ENCODE measurements at regions of chr19 and their contacts with region 1.

Region 1: GRCh38 chr19:52139252-52140031 is at the start of gene ZNF616:
- DNase-seq: peak; percentile 96
- H3K4me3 Mint-ChIP-seq: peak within 1 kb of the TSS; percentile 95
- H3K27ac Mint-ChIP-seq: peak within 1 kb of the TSS; percentile 82
- H3K4me1 Mint-ChIP-seq: peaks cover 11% of the 10 kb centered on the region
- H3K27me3 Mint-ChIP-seq: no peaks in the 10 kb centered on the region
- CTCF ChIP-seq: peak; percentile 60
- total RNA-seq, gene ZNF616: 9.5 and 13.5 TPM in 2 replicates

Region 2: GRCh38 chr19:52048555-52049501 is 90.6 kb before region 1 on chr19 and contains the start of gene ZNF432:
- CTCF ChIA-PET with region 1: interaction called, 3 read pairs
- POLR2A ChIA-PET with region 1: interaction called, 12 read pairs
- intact Hi-C with region 1: no loop called
- DNase-seq: peak; percentile 92
- H3K4me3 Mint-ChIP-seq: peak within 1 kb of the TSS; percentile 99
- H3K27ac Mint-ChIP-seq: peak within 1 kb of the TSS; percentile 100
- H3K4me1 Mint-ChIP-seq: peaks cover 11% of the 10 kb centered on the region
- H3K27me3 Mint-ChIP-seq: no peaks in the 10 kb centered on the region
- CTCF ChIP-seq: no peak
- total RNA-seq, gene ZNF432: 17.2 and 25.4 TPM in 2 replicates

Region 3: DNA sequence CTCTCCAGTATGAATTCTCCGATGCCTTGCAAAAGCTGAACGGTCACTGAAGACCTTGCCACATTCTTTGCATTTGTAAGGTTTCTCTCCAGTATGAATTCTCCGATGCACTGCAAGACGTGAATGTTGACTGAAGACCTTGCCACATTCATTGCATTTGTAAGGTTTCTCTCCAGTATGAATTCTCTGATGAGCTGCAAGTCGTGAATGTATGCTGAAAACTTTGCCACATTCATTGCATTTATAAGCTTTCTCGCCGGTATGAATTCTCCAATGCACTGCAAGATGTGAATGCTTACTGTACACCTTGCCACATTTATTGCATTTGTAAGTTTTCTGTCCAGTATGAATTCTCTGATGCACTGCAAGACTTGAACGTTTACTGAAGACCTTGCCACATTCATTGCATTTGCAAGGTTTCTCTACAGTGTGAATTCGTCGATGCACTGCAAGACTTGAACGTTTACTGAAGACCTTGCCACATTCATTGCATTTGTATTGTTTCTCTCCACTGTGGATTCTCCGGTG is 23.9 kb before region 1 on chr19:
- CTCF ChIA-PET with region 1: no interaction called
- POLR2A ChIA-PET with region 1: no interaction called
- intact Hi-C with region 1: no loop called
- DNase-seq: no peak
- H3K4me3 Mint-ChIP-seq: no peak overlapping the region
- H3K27ac Mint-ChIP-seq: no peak overlapping the region
- H3K4me1 Mint-ChIP-seq: no peaks in the 10 kb centered on the region
- H3K27me3 Mint-ChIP-seq: no peaks in the 10 kb centered on the region
- CTCF ChIP-seq: no peak

Region 4: DNA sequence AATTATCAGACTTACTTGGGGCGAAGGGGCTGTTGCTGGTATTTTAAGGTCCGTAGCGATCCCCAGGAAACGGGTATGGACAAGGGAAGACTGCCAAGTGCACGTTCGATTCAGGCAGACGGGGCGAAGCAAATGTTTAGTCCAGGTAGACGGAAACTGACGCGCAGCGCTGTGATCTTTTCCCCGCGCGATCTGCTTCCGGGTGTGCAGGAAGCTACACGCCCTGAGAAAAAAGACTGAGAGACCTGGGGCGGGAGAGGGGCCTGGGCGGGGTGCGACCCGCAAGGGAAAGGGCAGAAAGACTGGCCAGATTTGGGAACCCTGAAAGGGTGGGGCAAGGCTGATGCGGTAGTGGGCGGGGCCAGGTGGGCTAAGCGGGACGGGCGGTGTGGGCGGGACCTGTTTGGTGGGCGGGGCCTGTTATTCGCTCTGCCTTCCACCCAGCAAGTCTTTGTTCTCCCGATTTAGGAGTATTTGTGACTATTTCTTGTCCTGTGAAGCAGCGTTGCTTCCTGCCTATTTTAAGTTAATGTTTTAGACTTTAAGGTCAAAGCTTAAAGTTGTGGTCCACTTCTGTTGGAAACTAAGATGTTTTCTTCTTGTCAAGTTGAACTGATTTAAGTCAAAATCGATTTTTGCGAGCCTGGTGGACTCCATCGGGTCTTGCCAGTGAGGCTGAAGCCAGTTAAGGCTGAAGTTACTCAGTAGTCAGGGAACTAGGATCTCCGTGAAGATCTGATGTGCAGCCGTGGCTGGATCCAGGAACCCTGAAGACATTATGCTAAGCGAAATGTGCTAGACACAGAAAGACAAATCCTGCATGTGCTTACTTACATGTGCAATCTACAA is 32.1 kb after region 1 on chr19 and contains the start of gene ZNF836:
- CTCF ChIA-PET with region 1: interaction called, 4 read pairs
- POLR2A ChIA-PET with region 1: interaction called, 45 read pairs
- intact Hi-C with region 1: no loop called
- DNase-seq: peak; percentile 83
- H3K4me3 Mint-ChIP-seq: peak within 1 kb of the TSS; percentile 99
- H3K27ac Mint-ChIP-seq: peak within 1 kb of the TSS; percentile 60
- H3K4me1 Mint-ChIP-seq: peaks cover 11% of the 10 kb centered on the region
- H3K27me3 Mint-ChIP-seq: no peaks in the 10 kb centered on the region
- CTCF ChIP-seq: no peak
- total RNA-seq, gene ZNF836: 4.3 and 7.7 TPM in 2 replicates

Region 5: GRCh38 chr19:52231154-52231910 is 91.9 kb after region 1 on chr19:
- CTCF ChIA-PET with region 1: interaction called, 10 read pairs
- POLR2A ChIA-PET with region 1: interaction called, 4 read pairs
- intact Hi-C with region 1: no loop called
- DNase-seq: no peak
- H3K4me3 Mint-ChIP-seq: no peak overlapping the region
- H3K27ac Mint-ChIP-seq: no peak overlapping the region
- H3K4me1 Mint-ChIP-seq: no peaks in the 10 kb centered on the region
- H3K27me3 Mint-ChIP-seq: no peaks in the 10 kb centered on the region
- CTCF ChIP-seq: no peak

Region 6: GRCh38 chr19:52296773-52297600 is 157.5 kb after region 1 on chr19 and contains the start of gene ZNF480:
- CTCF ChIA-PET with region 1: no interaction called
- POLR2A ChIA-PET with region 1: no interaction called
- intact Hi-C with region 1: no loop called
- DNase-seq: peak; percentile 69
- H3K4me3 Mint-ChIP-seq: peak within 1 kb of the TSS; percentile 90
- H3K27ac Mint-ChIP-seq: peak within 1 kb of the TSS; percentile 85
- H3K4me1 Mint-ChIP-seq: peaks cover 13% of the 10 kb centered on the region
- H3K27me3 Mint-ChIP-seq: no peaks in the 10 kb centered on the region
- CTCF ChIP-seq: no peak
- total RNA-seq, gene ZNF480: 13.1 and 15.8 TPM in 2 replicates

Region 7: DNA sequence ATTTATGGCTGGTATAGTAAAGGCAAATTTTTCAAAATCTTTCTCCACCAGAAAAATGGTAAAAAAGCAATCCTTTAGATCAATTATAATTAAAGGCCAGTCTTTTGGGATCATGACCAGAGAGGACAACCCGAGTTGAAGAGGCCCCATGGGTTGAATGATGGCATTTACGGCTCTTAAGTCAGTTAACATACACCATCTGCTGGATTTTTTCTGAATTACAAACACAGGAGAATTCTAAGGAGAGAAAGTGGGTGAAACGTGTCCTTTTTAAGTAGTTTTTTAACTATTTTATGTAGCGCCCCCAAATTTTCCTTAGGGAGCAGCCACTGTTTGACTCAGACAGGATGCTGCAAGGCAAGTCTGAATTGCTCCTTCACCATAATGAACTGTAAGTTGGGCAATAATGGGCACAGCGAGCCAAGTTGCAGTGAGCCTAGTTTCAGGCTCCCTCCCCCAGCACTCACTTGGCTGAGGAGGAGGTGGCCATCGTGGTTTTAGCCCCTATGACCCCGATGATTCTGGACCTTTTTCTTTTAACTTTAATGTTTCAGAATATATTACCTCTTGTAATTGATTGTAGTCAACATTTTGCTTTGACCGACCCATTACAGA is 609.0 kb after region 1 on chr19:
- CTCF ChIA-PET with region 1: no interaction called
- POLR2A ChIA-PET with region 1: no interaction called
- intact Hi-C with region 1: loop called (anchors 5 kb)
- DNase-seq: peak; percentile 47
- H3K4me3 Mint-ChIP-seq: no peak overlapping the region
- H3K27ac Mint-ChIP-seq: no peak overlapping the region
- H3K4me1 Mint-ChIP-seq: no peaks in the 10 kb centered on the region
- H3K27me3 Mint-ChIP-seq: no peaks in the 10 kb centered on the region
- CTCF ChIP-seq: peak; percentile 67

Measured in MCF 10A (cell line).